Right ventricle myocardium inferior (tissue), 1 donor: ENCODE measurements at regions of chr9 and their contacts with region 1.

Region 1: GRCh38 chr9:21110708-21111576 is 30.7 kb downstream of the IFNW1 start:
- DNase-seq: no peak
- ATAC-seq: peak; percentile 65

Region 2: DNA sequence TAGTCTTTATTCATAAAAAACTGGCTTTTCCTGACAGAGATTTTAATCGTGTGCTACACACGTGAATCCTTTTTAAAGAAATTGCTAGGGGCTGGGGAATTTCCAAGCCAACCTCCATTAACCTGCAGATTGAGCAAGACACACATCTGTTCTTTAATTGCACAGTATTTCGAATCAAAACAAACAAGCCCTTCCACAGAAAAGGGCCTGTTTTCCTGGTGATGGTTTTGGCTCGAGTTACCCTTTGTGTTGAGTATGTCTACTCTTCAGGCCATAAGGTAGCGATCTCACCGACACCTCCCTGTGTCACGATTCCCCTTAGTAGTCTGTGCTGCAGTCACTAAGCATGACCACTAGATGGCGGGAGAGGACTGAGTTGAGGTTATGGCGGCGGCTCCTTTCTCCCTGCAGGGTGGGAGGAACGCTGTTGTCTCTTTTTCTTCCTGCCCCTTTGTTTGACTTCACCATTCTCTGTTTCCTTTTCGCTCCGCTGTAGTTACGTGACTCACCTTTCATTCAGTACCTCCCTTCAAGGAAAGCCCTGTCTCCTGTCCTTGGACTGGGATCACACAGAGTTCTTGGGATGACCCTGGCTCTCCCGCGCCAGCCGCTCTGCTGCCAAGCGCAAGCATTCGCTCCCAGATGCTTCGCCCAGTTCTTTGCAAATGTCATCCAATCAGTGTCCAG is 1185.0 kb before region 1 on chr9:
- intact Hi-C with region 1: loop called (anchors 5 kb)
- DNase-seq: no peak
- ATAC-seq: peak; percentile 93

Region 3: DNA sequence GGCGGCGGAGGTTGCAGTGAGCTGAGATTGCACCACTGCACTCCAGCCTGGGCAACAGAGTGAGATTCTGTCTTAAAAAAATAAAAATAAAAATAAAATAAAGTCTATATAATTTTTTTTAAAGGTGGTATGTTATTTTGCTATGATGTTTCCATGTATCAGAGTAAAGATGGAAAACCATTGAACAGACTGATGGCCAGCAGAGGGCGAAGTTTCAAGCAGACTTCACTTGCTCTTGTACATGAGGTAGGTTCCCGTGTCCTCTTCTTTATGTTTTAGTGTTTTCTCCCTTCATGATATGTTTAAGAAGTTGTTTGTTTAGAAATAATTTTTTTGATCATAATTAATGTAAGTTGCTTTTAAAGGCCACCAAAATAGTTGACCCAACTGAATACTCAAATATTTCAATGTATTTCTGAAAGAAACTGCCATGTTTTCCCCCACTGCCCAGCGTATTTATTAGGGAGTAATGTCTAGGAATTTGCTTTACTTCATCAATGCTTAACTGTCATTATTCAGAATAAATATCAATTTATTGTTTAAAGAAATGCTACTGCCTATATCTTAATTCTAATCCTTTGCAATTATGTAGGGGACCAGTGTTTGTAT is 225.9 kb before region 1 on chr9:
- intact Hi-C with region 1: loop called (anchors 5 kb)
- DNase-seq: no peak
- ATAC-seq: no peak

Region 4: GRCh38 chr9:20941174-20941690 is 169.7 kb before region 1 on chr9:
- intact Hi-C with region 1: loop called (anchors 10 kb)
- DNase-seq: no peak
- ATAC-seq: peak; percentile 89

Region 5: GRCh38 chr9:21135504-21136135 is 24.7 kb after region 1 on chr9:
- intact Hi-C with region 1: no loop called
- DNase-seq: no peak
- ATAC-seq: no peak